ENCODE measurements at regions of chr2 and their contacts with region 1.

Region 1: GRCh38 chr2:11129598-11130449 is 25.4 kb upstream of the SLC66A3 start:
- DNase-seq: peak; percentile 82

Region 2: GRCh38 chr2:10832203-10832936 is 297.5 kb before region 1 on chr2:
- CTCF ChIA-PET with region 1: interaction called, 27 read pairs
- POLR2A ChIA-PET with region 1: interaction called, 3 read pairs
- DNase-seq: peak; percentile 89

Region 3: DNA sequence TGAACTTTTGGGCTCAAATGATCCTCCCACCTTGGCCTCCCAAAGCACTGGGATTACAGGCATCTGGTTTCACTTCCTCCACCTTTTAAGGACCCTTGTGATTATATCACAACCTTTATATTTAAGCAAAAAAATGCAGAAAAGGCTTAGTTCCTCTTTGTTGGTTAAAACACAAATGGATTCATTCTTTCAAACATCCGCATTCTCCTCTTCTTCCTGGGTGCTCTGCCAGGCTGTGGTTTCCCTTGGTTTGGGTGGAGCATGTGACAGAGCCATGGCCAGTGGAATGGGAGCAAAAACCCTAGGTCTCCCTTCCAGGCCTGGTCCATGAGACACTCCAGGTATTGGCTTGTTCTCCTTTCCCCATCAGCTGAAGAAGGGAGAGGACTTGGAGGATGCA is 15.5 kb after region 1 on chr2:
- CTCF ChIA-PET with region 1: interaction called, 11 read pairs
- POLR2A ChIA-PET with region 1: interaction called, 3 read pairs
- DNase-seq: no peak

Region 4: DNA sequence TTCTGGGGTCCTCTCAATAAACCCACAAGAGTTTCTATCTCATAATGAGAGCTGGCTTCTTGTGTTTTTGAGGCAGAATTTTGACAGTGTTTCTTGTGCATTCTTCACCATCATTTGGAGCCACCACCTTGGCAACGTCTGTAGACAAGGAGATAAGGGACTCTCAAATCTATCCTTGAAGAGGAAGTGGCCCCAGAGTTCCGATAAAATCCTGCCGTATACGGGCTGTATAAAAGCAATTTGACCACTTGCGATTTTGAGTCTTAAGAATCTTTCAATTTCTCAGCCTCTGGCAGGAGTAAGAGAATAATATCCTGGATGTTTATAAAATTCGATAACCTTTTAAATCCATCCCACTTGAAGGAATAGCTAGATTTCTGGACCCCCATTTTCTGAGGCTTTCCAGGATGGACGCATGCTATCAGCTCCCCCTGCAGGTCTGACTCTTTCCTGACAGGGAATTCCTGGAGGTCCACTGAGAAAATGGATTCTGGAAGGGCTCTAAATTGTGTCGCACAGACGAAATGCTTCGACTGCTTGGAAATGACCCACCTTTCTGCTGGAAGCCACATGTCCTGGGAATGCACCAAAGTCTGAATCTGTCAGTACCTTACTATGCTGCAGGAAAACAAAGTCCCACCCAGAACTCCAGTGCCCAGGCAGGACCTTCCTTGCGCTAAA is 282.1 kb after region 1 on chr2:
- CTCF ChIA-PET with region 1: interaction called, 26 read pairs
- POLR2A ChIA-PET with region 1: interaction called, 6 read pairs
- DNase-seq: peak; percentile 68

Region 5: GRCh38 chr2:11583840-11584524 is 454.2 kb after region 1 on chr2:
- CTCF ChIA-PET with region 1: interaction called, 22 read pairs
- POLR2A ChIA-PET with region 1: no interaction called
- DNase-seq: peak; percentile 81